ENCODE measurements at regions of chr1 and their contacts with region 1.

Region 1: DNA sequence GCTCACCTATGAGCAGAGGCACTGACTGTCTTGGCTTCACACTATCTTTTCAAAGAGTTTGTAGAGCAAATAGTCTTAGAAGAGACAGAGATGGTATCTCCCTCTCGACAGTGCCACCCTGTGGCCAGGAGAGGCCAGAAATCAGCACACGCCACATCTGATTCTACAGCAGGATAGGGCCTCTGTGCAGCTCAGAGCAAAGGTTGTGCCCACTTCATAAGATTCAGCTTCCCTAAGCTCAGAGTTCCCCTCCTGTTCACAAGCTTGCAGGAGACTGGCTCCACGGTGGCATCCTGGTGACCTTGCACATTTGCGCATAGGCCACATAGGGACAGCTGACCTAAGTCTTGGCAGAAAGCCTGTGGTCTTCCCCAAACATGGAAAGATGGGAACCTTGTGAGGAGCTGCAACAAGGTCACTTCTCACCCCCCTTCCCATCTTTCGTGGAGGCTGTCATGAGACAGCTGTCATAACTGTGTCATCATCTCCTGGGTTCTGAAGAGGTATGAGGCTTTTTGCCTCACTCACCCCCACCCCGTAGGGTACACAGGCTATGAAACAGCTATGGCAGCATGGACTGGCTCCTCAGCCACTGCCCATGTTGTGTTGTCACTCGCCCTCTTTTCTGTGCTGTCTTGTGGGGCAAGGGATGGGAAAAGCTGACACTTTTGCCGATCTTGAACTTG is 3.0 kb downstream of the ITLN2 start:
- DNase-seq: peak in 8 of 10 donors; percentile 24 to 94 (median 54)

Region 2: DNA sequence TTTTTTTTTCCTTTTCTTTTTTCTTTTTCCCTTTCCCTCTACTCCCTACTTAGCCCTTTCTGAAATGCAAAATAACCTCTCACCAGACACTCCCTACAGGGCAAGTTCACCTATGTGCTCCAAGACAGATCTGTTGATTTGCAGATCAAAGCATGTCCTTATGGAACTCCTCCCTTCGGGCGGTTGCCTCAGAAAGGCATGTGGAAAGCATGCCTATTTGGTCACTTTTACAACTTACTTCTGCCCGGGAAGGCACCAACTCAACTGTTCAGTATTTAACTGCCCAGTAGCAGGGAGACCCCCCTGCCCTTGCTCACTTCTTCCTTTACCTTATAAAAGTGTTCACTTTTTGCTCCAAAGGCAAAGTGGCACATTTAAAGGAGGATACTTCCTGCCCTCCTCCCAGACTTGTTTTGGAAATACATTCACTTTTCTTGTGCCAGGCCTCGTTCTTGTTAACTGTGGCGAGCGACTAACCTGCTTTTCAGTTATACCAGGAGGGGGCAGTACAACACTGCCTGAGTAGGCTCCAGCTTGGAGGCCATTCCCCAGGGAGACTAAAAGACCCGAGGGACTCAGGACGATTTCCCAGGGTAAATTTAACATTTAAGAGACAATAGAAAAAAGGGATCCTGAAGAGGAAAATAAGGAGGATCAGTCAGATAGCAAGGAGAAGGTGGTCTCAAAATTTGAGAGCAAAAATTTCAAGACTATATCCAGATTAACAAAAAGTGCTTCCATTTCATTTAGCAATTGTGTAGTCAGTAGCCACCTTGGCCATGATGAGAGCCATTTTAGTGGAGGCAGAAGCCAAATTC is 224.9 kb before region 1 on chr1:
- intact Hi-C with region 1: loop called (anchors 1 kb)
- DNase-seq: peak in 7 of 10 donors; percentile 12 to 90 (median 44)

Region 3: DNA sequence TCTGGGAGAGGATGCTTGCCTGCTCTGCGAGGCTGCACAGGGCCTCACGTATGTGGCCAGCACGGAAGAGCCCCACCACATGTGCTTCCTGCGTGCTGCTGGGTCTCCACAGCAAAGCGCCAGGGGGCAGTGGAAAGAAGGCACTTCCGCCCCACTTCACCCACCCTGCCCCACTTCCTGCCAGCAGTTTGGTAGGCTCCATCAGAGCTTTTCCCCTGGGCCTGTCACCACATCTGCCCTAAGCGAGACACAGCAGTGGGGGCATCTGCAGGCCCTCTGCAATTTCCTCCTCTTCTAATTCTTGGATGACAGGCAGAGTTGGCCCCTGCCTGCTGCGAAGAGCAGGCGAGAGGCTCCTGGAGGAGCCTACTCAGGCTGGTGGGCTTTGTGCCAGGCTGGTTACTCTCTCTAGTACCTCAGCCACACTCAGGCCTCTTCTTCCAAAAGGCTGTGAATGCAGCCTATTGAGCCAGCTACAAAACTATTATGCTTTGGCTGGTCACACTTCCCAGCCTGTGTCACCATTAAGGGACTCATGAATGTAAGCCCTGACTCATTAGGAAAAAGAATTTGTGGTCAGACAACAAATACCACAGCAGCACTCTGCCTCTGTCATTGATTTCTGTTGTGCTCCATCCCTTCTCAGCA is 113.9 kb before region 1 on chr1:
- intact Hi-C with region 1: loop called (anchors 5 kb)
- DNase-seq: peak in 1 of 10 donors; percentile 19